T-cell (primary cell): ENCODE measurements at regions of chr4 and their contacts with region 1.

Region 1: GRCh38 chr4:108628411-108628810 is 8.0 kb downstream of the RPL34 start:
- DNase-seq: no peak
- ATAC-seq: no peak
- H3K4me3 ChIP-seq: no peak overlapping the region
- H3K4me3 Mint-ChIP-seq: no peak overlapping the region
- H3K27ac ChIP-seq: no peak overlapping the region
- H3K27ac Mint-ChIP-seq: no peak overlapping the region
- H3K4me1 ChIP-seq: no peaks in the 10 kb centered on the region
- H3K4me1 Mint-ChIP-seq: peaks cover 13 to 18% (median 17%) of the 10 kb centered on the region in 3 donors
- H3K27me3 ChIP-seq: no peaks in the 10 kb centered on the region
- H3K27me3 Mint-ChIP-seq: no peaks in the 10 kb centered on the region

Region 2: GRCh38 chr4:108560616-108561015 is 67.8 kb before region 1 on chr4:
- CTCF ChIA-PET with region 1: no interaction called
- POLR2A ChIA-PET with region 1: interaction called in 1 of 2 experiments, 11 read pairs
- DNase-seq: no peak
- ATAC-seq: no peak
- H3K4me3 ChIP-seq: no peak overlapping the region
- H3K4me3 Mint-ChIP-seq: no peak overlapping the region
- H3K27ac ChIP-seq: no peak overlapping the region
- H3K27ac Mint-ChIP-seq: no peak overlapping the region
- H3K4me1 ChIP-seq: no peaks in the 10 kb centered on the region
- H3K4me1 Mint-ChIP-seq: peaks cover 4 to 24% (median 8%) of the 10 kb centered on the region in 3 donors
- H3K27me3 ChIP-seq: peaks cover 0 to 7% of the 10 kb centered on the region in 2 experiments
- H3K27me3 Mint-ChIP-seq: no peaks in the 10 kb centered on the region

Region 3: GRCh38 chr4:108742451-108743420 is 114.3 kb after region 1 on chr4:
- CTCF ChIA-PET with region 1: no interaction called
- POLR2A ChIA-PET with region 1: no interaction called
- DNase-seq: no peak
- ATAC-seq: no peak
- H3K4me3 ChIP-seq: no peak overlapping the region
- H3K4me3 Mint-ChIP-seq: no peak overlapping the region
- H3K27ac ChIP-seq: no peak overlapping the region
- H3K27ac Mint-ChIP-seq: no peak overlapping the region
- H3K4me1 ChIP-seq: peaks cover 0 to 8% of the 10 kb centered on the region in 2 experiments
- H3K4me1 Mint-ChIP-seq: peaks cover 5 to 8% (median 7%) of the 10 kb centered on the region in 3 donors
- H3K27me3 ChIP-seq: no peaks in the 10 kb centered on the region
- H3K27me3 Mint-ChIP-seq: no peaks in the 10 kb centered on the region